Head of caudate nucleus (tissue), 42 donors: ENCODE measurements at regions of chr1 and their contacts with region 1.

Region 1: GRCh38 chr1:64136752-64137411 is 66.5 kb upstream of the UBE2U start:
- DNase-seq: peak; percentile 13 to 95 (median 84)

Region 2: GRCh38 chr1:63691701-63692425 is 445.0 kb before region 1 on chr1:
- intact Hi-C with region 1: loop called (anchors 10 kb)
- DNase-seq: peak in 29 of 42 donors; percentile 22 to 84 (median 58)

Region 3: DNA sequence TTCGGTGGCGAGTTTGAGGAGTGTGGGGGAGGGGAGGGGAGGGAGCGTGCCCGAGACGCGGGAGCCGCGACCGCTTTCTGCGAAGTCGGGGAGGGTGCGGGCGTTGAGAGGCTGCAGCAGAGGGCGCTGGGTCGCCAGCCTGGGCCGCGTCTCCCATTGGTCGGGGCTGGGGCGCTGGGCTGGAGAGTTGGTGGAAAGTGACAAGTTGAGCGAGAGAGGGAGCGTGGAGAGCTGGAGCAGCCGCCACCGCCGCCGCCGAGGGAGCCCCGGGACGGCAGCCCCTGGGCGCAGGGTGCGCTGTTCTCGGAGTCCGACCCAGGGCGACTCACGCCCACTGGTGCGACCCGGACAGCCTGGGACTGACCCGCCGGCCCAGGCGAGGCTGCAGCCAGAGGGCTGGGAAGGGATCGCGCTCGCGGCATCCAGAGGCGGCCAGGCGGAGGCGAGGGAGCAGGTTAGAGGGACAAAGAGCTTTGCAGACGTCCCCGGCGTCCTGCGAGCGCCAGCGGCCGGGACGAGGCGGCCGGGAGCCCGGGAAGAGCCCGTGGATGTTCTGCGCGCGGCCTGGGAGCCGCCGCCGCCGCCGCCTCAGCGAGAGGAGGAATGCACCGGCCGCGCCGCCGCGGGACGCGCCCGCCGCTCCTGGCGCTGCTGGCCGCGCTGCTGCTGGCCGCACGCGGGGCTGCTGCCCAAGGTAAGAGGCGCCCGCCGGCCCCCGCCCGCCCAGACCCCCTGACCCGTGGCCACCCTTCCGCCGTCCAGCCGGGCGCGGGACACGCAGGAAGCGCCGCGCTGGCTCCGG is 362.9 kb before region 1 on chr1 and contains the start of gene ROR1:
- intact Hi-C with region 1: loop called (anchors 10 kb)
- DNase-seq: peak; percentile 59 to 97 (median 89)

Region 4: DNA sequence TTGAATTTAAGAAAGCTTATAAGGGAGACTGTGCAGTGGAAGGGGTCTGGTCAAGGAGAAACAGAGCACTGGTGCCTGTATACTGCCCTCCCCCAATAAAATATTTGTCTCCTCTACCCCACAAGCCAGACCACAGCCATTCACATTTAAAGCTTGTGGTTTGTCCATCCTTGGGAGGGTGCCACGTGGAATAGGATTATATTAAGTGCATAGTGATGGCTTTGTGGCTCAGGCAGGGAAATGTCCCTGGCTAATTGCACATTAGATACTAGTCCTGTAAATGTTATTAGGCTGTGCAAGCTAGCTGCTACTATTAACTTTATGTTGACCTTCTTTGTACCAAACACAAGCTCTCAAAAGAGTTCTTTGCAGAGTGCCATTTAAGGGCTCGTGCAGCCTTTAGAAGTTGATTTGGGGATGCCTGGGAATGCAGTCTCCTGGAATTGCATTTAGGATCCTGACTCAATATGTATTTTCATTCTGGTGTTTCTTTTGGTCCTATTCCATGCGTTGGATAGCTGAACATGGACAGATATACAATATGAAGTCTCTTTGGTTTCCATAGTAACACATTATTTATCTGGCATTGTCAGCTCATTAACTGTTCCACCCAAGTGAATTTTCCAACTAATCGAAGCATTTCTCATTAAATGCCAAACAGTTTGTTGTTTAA is 152.5 kb before region 1 on chr1:
- intact Hi-C with region 1: no loop called
- DNase-seq: no peak